Activated CD8-positive, alpha-beta T cell treated with anti-CD3 and anti-CD28 coated beads for 36 hours (primary cell): ENCODE measurements at regions of chr6 and their contacts with region 1.

Region 1: DNA sequence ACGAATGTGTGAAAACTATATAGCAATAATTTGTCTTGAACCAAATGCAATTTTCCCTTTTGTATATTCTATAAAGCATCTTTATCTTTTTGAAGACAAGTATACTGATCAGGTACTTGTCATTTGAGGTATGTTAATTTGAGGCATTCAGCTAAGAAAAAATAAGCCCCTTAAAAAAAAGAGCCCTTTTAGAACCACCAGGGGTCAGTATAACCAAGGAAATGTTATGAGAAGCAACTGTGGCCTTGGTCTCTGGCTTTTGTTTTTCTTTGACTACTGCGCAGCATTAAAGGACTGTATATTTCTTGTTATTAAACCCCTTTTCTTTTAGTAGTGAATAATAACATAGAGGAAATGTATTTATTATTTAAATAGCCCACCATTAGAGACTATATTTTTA is 43.1 kb downstream of the CD109 start:
- DNase-seq: no peak
- ATAC-seq: peak; percentile 73
- H3K4me3 Mint-ChIP-seq: no peak overlapping the region
- H3K27ac Mint-ChIP-seq: no peak overlapping the region
- H3K4me1 Mint-ChIP-seq: no peaks in the 10 kb centered on the region
- H3K27me3 Mint-ChIP-seq: no peaks in the 10 kb centered on the region
- CTCF ChIP-seq: peak; percentile 77

Region 2: DNA sequence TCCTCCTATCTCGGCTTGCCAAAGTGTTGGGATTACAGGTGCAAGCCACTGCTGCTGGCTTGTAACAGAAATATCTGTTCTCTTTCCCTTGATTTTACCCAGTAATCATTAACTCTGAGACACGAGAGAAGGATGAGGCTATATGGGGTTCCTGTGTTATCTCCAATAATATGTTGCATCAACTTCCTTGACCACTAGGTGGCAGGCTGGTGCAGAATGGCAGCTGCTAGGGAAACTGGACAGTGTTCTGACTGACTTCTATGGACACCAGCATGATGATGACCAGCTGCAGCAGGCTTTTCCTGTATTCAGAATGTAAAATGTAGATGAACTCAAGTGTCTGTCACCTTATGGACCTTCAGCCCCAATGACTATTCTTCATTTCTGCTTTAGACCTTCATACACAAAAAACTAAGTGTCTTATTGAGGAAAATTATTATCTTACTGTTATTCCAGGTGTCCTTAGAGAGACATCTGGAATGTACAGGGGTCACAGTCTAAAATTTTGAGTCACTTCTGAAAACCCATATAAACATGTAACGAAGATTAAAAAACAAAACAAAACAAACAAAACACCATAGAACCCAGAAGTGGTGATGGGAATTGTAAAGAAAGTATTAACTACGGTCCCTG is 63.5 kb before region 1 on chr6:
- CTCF ChIA-PET with region 1: interaction called, 135 read pairs
- POLR2A ChIA-PET with region 1: no interaction called
- intact Hi-C with region 1: no loop called
- DNase-seq: peak; percentile 84
- ATAC-seq: peak; percentile 94
- H3K4me3 Mint-ChIP-seq: no peak overlapping the region
- H3K27ac Mint-ChIP-seq: no peak overlapping the region
- H3K4me1 Mint-ChIP-seq: peaks cover 7% of the 10 kb centered on the region
- H3K27me3 Mint-ChIP-seq: peaks cover 22% of the 10 kb centered on the region
- CTCF ChIP-seq: peak; percentile 93

Region 3: GRCh38 chr6:73790574-73790973 is 51.5 kb after region 1 on chr6:
- CTCF ChIA-PET with region 1: no interaction called
- POLR2A ChIA-PET with region 1: no interaction called
- intact Hi-C with region 1: no loop called
- DNase-seq: no peak
- ATAC-seq: no peak
- H3K4me3 Mint-ChIP-seq: no peak overlapping the region
- H3K27ac Mint-ChIP-seq: no peak overlapping the region
- H3K4me1 Mint-ChIP-seq: peaks cover 5% of the 10 kb centered on the region
- H3K27me3 Mint-ChIP-seq: no peaks in the 10 kb centered on the region
- CTCF ChIP-seq: no peak

Region 4: DNA sequence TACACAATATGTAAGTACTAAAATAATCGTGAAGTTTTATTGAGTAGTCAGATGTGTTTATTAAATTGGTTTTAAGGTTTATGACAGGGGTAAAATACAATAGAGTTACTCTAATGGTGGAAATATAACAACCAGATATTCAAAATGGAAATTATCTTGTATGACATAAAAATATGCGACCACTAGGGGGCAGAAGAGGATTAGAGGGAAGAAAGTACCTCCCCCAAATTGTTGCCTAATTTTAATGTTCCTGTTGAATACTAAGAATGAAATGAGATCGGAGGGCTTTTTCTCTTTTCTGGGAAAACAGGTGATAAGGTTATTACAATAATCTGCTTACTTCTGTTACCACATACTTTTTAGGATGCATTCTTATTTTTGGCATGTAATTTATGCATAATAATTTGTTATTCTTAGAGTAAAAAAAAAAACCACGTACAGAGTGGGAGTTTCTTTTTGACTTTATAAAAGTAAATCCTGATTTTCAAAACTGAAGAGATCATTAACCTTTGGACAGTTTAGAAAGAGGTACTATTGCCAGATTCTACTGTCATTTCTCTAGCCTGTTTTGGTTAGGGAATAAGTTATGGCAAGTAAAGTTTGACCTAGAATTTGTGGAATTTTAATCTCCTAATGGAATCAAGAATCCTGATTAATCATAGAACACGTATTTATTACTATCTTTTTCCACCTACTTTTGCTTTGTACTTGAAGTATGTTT is 116.1 kb after region 1 on chr6:
- CTCF ChIA-PET with region 1: interaction called, 6 read pairs
- POLR2A ChIA-PET with region 1: no interaction called
- intact Hi-C with region 1: loop called (anchors 5 kb)
- DNase-seq: peak; percentile 4
- ATAC-seq: peak; percentile 34
- H3K4me3 Mint-ChIP-seq: no peak overlapping the region
- H3K27ac Mint-ChIP-seq: no peak overlapping the region
- H3K4me1 Mint-ChIP-seq: peaks cover 2% of the 10 kb centered on the region
- H3K27me3 Mint-ChIP-seq: no peaks in the 10 kb centered on the region
- CTCF ChIP-seq: peak; percentile 89